A673 (cell line): ENCODE measurements at regions of chr13 and their contacts with region 1.

Region 1: GRCh38 chr13:86567119-86567518 is 767.9 kb upstream of the SLITRK6 start:
- DNase-seq: no peak
- H3K4me3 ChIP-seq: no peak overlapping the region
- H3K27ac ChIP-seq: no peak overlapping the region
- H3K4me1 ChIP-seq: no peaks in the 10 kb centered on the region
- H3K27me3 ChIP-seq: no peaks in the 10 kb centered on the region
- CTCF ChIP-seq: no peak

Region 2: DNA sequence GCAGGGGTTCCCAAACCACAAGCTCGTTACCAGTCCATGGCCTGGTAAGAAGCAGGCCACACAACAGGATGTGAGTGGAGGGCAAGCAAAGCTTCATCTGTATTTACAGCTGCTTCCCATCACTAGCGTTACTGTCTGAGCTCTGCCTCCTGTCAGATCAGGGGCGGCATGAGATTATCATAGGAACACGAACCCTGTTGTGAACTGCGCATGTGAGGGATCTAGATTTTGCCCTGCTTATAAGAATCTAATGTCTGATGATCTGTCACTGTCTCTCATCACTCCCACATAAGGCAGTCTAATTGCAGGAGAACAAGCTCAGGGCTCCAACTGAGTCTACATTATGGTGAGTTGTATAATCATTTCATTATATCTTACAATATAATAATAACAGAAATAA is 90.5 kb before region 1 on chr13:
- CTCF ChIA-PET with region 1: no interaction called
- POLR2A ChIA-PET with region 1: interaction called, 17 read pairs
- intact Hi-C with region 1: no loop called
- DNase-seq: no peak
- H3K4me3 ChIP-seq: no peak overlapping the region
- H3K27ac ChIP-seq: no peak overlapping the region
- H3K4me1 ChIP-seq: peaks cover 5% of the 10 kb centered on the region
- H3K27me3 ChIP-seq: no peaks in the 10 kb centered on the region
- CTCF ChIP-seq: no peak

Region 3: DNA sequence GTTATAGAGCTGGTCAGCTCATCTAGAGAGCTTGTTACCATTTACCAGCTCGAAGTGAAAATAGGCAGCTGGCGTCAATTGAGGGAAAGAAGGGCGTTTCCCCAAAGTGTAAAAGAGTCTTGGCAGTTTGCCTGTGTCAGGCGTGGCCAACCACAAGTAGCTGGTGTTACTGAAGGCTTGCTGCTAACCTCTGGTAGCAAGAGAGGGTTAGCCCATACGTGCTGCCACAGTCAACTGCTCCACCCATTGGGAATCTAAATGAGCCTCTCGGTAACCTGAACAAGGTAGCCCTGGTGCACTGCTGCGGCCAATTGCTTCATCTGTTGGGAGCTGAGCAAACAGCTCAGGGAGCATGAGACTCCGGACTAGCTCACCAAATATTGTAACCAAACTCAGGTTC is 789.2 kb after region 1 on chr13:
- CTCF ChIA-PET with region 1: no interaction called
- POLR2A ChIA-PET with region 1: no interaction called
- intact Hi-C with region 1: no loop called
- DNase-seq: peak; percentile 4
- H3K4me3 ChIP-seq: no peak overlapping the region
- H3K27ac ChIP-seq: no peak overlapping the region
- H3K4me1 ChIP-seq: no peaks in the 10 kb centered on the region
- H3K27me3 ChIP-seq: no peaks in the 10 kb centered on the region
- CTCF ChIP-seq: no peak